Activated B cell treated with CpG ODN at 0.5 μM for 24 hours (primary cell): ENCODE measurements at regions of chr6 and their contacts with region 1.

Region 1: GRCh38 chr6:89412071-89413005 is at the start of gene RRAGD:
- DNase-seq: peak; percentile 56
- ATAC-seq: peak; percentile 72
- H3K4me3 Mint-ChIP-seq: peak within 1 kb of the TSS; percentile 92
- H3K27ac Mint-ChIP-seq: peak within 1 kb of the TSS; percentile 56
- H3K4me1 Mint-ChIP-seq: peaks cover 21% of the 10 kb centered on the region
- H3K27me3 Mint-ChIP-seq: peaks cover 14% of the 10 kb centered on the region
- CTCF ChIP-seq: no peak
- total RNA-seq, gene RRAGD: 5.4 and 5.6 TPM in 2 replicates

Region 2: DNA sequence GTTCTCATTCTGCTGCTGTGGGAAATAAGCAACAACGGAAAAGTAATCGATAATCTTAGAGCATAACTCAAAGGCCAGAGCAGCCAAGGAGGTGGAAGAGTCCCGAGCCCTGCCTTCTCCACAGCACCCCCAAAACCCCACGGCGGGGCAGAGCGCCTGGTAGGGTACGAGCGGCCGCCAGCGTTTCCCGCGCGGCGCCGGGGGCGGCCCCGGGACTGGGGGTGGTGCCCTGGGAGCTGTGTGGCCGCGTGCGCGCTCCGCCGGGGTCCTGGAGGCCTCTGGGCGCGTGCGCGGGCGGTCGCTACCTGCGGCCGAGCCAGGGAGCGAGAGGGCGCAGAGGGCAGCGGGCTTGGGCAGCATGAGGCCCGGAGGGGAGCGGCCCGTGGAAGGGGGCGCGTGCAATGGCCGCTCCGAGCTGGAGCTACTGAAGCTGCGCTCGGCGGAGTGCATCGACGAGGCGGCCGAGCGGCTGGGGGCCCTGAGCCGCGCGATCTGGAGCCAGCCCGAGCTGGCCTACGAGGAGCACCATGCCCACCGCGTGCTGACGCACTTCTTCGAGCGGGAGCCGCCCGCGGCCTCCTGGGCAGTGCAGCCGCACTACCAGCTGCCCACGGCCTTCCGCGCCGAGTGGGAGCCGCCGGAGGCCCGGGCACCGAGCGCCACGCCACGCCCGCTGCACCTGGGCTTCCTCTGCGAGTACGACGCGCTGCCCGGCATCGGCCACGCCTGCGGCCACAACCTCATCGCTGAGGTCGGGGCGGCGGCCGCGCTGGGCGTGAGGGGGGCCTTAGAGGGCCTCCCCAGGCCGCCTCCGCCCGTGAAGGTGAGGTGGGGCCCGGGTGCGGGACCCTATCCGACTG is 266.3 kb before region 1 on chr6 and contains the start of gene PM20D2:
- CTCF ChIA-PET with region 1: no interaction called
- POLR2A ChIA-PET with region 1: no interaction called
- intact Hi-C with region 1: loop called (anchors 2 kb)
- DNase-seq: peak; percentile 72
- ATAC-seq: peak; percentile 78
- H3K4me3 Mint-ChIP-seq: peak within 1 kb of the TSS; percentile 90
- H3K27ac Mint-ChIP-seq: peak within 1 kb of the TSS; percentile 92
- H3K4me1 Mint-ChIP-seq: peaks cover 22% of the 10 kb centered on the region
- H3K27me3 Mint-ChIP-seq: no peaks in the 10 kb centered on the region
- CTCF ChIP-seq: no peak
- total RNA-seq, gene PM20D2: 10.9 and 11.6 TPM in 2 replicates

Region 3: DNA sequence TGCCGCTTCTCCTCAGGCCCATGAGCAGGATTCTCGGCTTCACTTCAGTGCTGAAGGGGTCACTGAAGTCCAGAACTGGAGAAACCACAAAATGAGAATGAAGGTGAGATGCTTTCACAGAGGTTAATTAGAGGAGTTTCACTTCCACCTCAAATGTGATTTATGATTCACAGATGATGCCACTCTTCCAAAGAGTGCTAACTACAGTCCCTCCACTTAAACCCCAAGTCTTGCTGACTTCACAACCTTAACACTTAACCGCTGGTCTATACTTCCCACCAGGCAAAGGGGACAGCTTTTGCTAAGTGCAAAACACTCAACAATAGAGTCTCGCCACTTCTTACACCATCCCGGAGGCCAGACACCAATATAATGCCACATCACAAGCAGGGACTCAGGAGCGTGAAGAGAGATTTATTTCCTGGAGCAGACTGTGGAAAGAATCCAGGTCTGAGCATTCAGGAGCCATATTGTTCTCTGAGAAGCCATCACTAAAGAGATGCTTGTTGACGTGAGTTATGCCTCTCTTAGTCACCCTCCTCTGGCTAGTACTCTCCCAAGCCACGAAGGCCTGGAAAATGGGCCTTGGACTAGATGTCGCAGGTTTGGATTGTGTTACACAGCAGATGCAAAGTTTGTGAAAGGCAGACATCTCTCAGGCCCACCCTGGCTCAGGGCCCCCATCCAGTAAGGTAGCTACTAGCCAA is 24.7 kb before region 1 on chr6:
- CTCF ChIA-PET with region 1: no interaction called
- POLR2A ChIA-PET with region 1: no interaction called
- intact Hi-C with region 1: loop called (anchors 1 kb)
- DNase-seq: no peak
- ATAC-seq: peak; percentile 87
- H3K4me3 Mint-ChIP-seq: peak overlapping the region; percentile 60
- H3K27ac Mint-ChIP-seq: peak overlapping the region; percentile 33
- H3K4me1 Mint-ChIP-seq: peaks cover 15% of the 10 kb centered on the region
- H3K27me3 Mint-ChIP-seq: peaks cover 4% of the 10 kb centered on the region
- CTCF ChIP-seq: no peak

Region 4: DNA sequence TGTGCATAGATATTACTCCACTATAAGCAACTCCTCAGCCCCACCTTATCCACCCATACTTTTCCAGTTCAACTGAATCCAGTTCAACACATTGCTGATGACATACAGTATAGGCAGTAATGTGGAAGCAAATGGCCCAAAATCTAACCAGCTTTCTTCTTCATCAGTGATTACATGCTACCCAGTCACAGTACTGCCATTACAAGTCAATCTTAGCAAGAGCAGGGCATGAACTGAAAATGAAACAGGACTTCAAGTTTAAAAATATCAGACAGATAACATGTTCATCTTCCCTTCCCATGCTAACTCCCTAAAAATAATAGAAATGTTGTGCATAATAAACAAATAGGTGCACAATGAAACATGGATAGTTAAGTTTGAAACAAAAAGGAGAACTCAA is 19.5 kb before region 1 on chr6:
- CTCF ChIA-PET with region 1: no interaction called
- POLR2A ChIA-PET with region 1: no interaction called
- intact Hi-C with region 1: loop called (anchors 2 kb)
- DNase-seq: no peak
- ATAC-seq: no peak
- H3K4me3 Mint-ChIP-seq: no peak overlapping the region
- H3K27ac Mint-ChIP-seq: no peak overlapping the region
- H3K4me1 Mint-ChIP-seq: peaks cover 5% of the 10 kb centered on the region
- H3K27me3 Mint-ChIP-seq: no peaks in the 10 kb centered on the region
- CTCF ChIP-seq: no peak

Region 5: GRCh38 chr6:89432875-89433251 is 20.5 kb after region 1 on chr6 and contains the start of gene ANKRD6:
- CTCF ChIA-PET with region 1: no interaction called
- POLR2A ChIA-PET with region 1: no interaction called
- intact Hi-C with region 1: loop called (anchors 1 kb)
- DNase-seq: peak; percentile 95
- ATAC-seq: peak; percentile 97
- H3K4me3 Mint-ChIP-seq: peak within 1 kb of the TSS; percentile 86
- H3K27ac Mint-ChIP-seq: peak within 1 kb of the TSS; percentile 41
- H3K4me1 Mint-ChIP-seq: peaks cover 11% of the 10 kb centered on the region
- H3K27me3 Mint-ChIP-seq: peaks cover 4% of the 10 kb centered on the region
- CTCF ChIP-seq: no peak
- total RNA-seq, gene ANKRD6: 6.6 and 9.6 TPM in 2 replicates

Region 6: GRCh38 chr6:90586836-90587638 is 1174.7 kb after region 1 on chr6 and contains the start of gene MAP3K7:
- CTCF ChIA-PET with region 1: no interaction called
- POLR2A ChIA-PET with region 1: no interaction called
- intact Hi-C with region 1: loop called (anchors 10 kb)
- DNase-seq: peak; percentile 91
- ATAC-seq: peak; percentile 86
- H3K4me3 Mint-ChIP-seq: peak within 1 kb of the TSS; percentile 94
- H3K27ac Mint-ChIP-seq: peak within 1 kb of the TSS; percentile 99
- H3K4me1 Mint-ChIP-seq: peaks cover 41% of the 10 kb centered on the region
- H3K27me3 Mint-ChIP-seq: peaks cover 7% of the 10 kb centered on the region
- CTCF ChIP-seq: no peak
- total RNA-seq, gene MAP3K7: 23.8 and 27.2 TPM in 2 replicates